PC-9 (cell line): ENCODE measurements at regions of chr3 and their contacts with region 1.

Region 1: GRCh38 chr3:39990532-39990931 is 181.1 kb downstream of the MYRIP start:
- DNase-seq: peak in 1 of 2 experiments; percentile 24
- H3K4me3 ChIP-seq: no peak overlapping the region
- H3K27ac ChIP-seq: no peak overlapping the region
- H3K4me1 ChIP-seq: no peaks in the 10 kb centered on the region
- H3K27me3 ChIP-seq: no peaks in the 10 kb centered on the region
- CTCF ChIP-seq: peak; percentile 80

Region 2: DNA sequence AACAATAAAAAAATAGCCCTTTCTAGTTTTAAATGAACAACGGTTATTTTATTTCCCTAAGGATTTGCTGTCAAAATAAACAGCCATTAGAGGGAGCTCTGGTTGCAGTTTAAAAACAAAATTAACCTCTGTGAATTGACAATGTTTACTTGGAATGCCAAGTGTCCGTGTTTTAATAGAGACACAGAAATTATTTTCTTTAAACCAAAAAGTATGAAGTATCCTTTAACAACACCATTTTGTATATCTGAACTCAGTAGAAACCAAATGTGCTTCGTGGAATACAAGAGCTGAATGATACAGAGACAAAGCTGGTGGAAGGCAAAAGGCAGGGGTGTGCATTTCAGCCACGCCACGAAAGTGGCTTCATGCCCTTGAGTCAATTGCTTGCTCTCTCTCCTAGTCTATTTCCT is 448.6 kb before region 1 on chr3:
- CTCF ChIA-PET with region 1: no interaction called
- POLR2A ChIA-PET with region 1: no interaction called
- intact Hi-C with region 1: loop called (anchors 2 kb)
- DNase-seq: no peak
- H3K4me3 ChIP-seq: no peak overlapping the region
- H3K27ac ChIP-seq: no peak overlapping the region
- H3K4me1 ChIP-seq: no peaks in the 10 kb centered on the region
- H3K27me3 ChIP-seq: no peaks in the 10 kb centered on the region
- CTCF ChIP-seq: peak; percentile 65